ENCODE measurements at regions of chr12 and their contacts with region 1.

Region 1: GRCh38 chr12:38664661-38665269 is 240.6 kb downstream of the CPNE8 start:
- DNase-seq: no peak
- H3K4me3 ChIP-seq: no peak overlapping the region
- H3K27ac ChIP-seq: no peak overlapping the region
- H3K4me1 ChIP-seq: no peaks in the 10 kb centered on the region
- H3K27me3 ChIP-seq: no peaks in the 10 kb centered on the region
- CTCF ChIP-seq: peak; percentile 66

Region 2: DNA sequence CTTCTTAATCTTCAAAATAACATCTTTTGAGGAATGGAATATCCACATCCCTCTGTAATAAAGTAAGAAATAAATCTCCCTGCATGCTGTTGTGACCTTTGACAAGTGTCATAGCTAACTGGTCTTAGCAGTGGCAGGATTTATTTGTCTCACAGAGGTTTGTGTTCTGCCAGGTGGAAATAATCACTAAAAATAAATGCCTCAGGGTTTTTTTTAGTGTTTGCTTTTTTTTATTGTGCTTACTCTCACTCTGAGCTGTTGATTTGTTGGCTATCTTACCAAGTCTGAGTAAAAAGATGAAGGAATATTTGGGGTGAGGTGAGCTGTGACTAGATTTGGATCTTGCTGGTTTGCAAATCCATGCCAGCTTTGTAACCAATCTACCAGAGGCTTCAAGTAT is 62.8 kb before region 1 on chr12:
- CTCF ChIA-PET with region 1: no interaction called
- POLR2A ChIA-PET with region 1: no interaction called
- intact Hi-C with region 1: loop called (anchors 10 kb)
- DNase-seq: peak in 1 of 2 experiments; percentile 60
- H3K4me3 ChIP-seq: no peak overlapping the region
- H3K27ac ChIP-seq: no peak overlapping the region
- H3K4me1 ChIP-seq: peaks cover 12% of the 10 kb centered on the region
- H3K27me3 ChIP-seq: no peaks in the 10 kb centered on the region
- CTCF ChIP-seq: no peak

Region 3: DNA sequence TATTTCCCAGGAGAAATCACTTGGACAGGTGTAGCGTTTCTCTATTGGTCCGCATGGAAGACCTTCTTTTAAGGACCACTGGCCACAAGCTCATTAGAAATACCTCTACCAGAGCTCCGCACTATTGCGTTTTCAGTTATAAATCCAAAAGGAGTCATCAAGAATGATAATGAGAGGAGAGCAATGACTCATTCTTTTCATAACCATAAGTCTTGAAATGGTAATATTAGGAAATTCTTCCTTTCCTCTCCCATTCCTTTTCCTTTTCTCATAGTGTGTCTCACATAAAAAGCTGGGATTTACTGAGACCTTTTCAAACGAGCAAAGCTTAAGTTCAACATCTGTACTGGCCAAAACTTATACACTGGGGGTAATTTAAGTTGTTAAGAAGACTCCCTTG is 24.9 kb after region 1 on chr12:
- CTCF ChIA-PET with region 1: interaction called, 21 read pairs
- POLR2A ChIA-PET with region 1: no interaction called
- intact Hi-C with region 1: no loop called
- DNase-seq: no peak
- H3K4me3 ChIP-seq: no peak overlapping the region
- H3K27ac ChIP-seq: no peak overlapping the region
- H3K4me1 ChIP-seq: 0 out of 2 replicates have a peak, but pooled peaks cover 6% of the 10 kb centered on the region
- H3K27me3 ChIP-seq: no peaks in the 10 kb centered on the region
- CTCF ChIP-seq: no peak